ENCODE measurements at regions of chr20 and their contacts with region 1.

Region 1: GRCh38 chr20:44405257-44405656 is 49.8 kb downstream of the HNF4A start:
- DNase-seq: no peak
- ATAC-seq: no peak
- H3K4me3 ChIP-seq: no peak overlapping the region
- H3K27ac ChIP-seq: no peak overlapping the region
- H3K4me1 ChIP-seq: peaks cover 12 to 21% of the 10 kb centered on the region in 2 experiments
- H3K27me3 ChIP-seq: peaks cover 0 to 25% of the 10 kb centered on the region in 2 experiments; a peak in 2 of 5 replicates
- CTCF ChIP-seq: no peak
- EP300 ChIP-seq: no peak
- POLR2A ChIP-seq: no peak
- RAD21 ChIP-seq: no peak

Region 2: DNA sequence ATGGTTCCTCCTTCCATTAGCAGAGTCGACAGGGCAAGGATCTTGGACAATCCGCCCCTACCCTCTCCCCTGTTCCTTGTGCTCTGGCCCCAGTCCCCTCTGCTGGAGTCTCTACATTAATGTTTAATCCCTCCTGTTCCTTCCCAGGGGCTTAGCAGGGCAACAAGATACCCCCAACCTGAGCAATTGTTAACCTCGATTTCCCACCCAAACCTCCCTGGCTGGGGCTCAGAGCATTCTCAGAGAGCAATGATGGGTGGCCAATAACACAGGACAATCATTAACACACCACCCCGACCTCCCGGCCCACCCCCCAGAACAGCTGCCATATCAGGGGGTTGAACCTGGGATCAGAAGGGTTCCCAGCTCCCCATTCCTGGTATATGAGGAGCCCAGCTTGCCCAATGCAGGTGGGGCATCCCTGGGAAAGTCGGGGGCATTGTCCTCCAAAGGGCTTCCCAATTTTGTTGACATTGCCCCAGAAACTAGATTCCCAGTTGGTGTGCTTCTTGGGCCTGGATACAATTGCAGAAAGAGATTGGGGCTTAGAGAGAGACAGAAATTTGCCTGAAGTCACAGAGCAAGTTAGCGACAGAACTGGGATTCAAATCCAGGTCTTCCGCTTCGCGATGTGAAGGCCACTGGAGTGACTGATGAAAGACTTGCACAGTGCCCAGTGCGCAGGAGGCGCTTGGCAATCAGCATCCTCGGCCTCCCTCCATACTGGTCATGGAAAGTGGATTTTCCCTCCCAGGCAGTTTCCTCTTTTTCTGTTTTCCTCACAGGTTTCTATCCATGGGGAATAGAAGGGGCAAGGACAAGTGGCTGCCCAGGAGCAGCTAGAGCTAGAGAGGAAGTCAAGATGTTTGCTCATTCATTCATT is 10.8 kb after region 1 on chr20:
- CTCF ChIA-PET with region 1: no interaction called
- POLR2A ChIA-PET with region 1: interaction called, 10 read pairs
- in situ Hi-C with region 1: no loop called
- intact Hi-C with region 1: no loop called
- DNase-seq: no peak
- ATAC-seq: no peak
- H3K4me3 ChIP-seq: no peak overlapping the region
- H3K27ac ChIP-seq: no peak overlapping the region
- H3K4me1 ChIP-seq: 0 out of 5 replicates have a peak, but pooled peaks cover 0 to 3% of the 10 kb centered on the region in 2 experiments
- H3K27me3 ChIP-seq: peaks cover 18 to 56% of the 10 kb centered on the region in 2 experiments
- CTCF ChIP-seq: no peak
- EP300 ChIP-seq: no peak
- POLR2A ChIP-seq: no peak
- RAD21 ChIP-seq: no peak

Measured in K562 (cell line).